ENCODE measurements at regions of chr12 and their contacts with region 1.

Region 1: GRCh38 chr12:53675651-53676453 is at the start of gene ATP5MC2:
- DNase-seq: peak; percentile 97 to 98
- H3K4me3 ChIP-seq: peak within 1 kb of the TSS; percentile 41
- H3K4me3 Mint-ChIP-seq: peak within 1 kb of the TSS; percentile 82
- H3K27ac Mint-ChIP-seq: peak within 1 kb of the TSS; percentile 87
- H3K4me1 ChIP-seq: 0 out of 2 replicates have a peak, but pooled peaks cover 5% of the 10 kb centered on the region
- H3K4me1 Mint-ChIP-seq: no peaks in the 10 kb centered on the region
- H3K27me3 ChIP-seq: no peaks in the 10 kb centered on the region
- H3K27me3 Mint-ChIP-seq: no peaks in the 10 kb centered on the region
- CTCF ChIP-seq: peak; percentile 91 to 99
- total RNA-seq, gene ATP5MC2: 156 and 160 TPM in 2 replicates

Region 2: DNA sequence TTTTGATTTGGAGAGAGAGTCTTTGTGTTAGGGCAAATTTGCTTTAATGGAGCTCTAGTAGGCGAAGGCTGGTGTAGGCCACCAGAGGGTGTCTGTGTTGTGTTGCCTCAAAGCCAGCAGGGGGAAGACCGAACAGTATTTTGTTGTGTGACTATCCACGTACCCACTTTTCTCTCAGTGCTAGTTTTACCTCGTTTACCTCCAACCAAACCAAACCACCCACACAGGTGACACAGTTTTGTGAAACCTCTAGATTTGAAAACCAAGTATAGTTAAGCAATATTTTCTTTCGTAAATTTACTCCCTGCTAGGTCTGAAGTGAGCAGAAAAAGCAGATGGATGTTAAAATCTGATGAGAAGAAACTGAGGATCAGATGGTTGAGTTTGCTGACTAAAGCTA is 132.3 kb before region 1 on chr12:
- CTCF ChIA-PET with region 1: interaction called, 43 read pairs
- POLR2A ChIA-PET with region 1: no interaction called
- intact Hi-C with region 1: loop called (anchors 1 kb)
- DNase-seq: peak; percentile 57 to 59
- H3K4me3 ChIP-seq: no peak overlapping the region
- H3K4me3 Mint-ChIP-seq: no peak overlapping the region
- H3K27ac Mint-ChIP-seq: no peak overlapping the region
- H3K4me1 ChIP-seq: peaks cover 9% of the 10 kb centered on the region
- H3K4me1 Mint-ChIP-seq: no peaks in the 10 kb centered on the region
- H3K27me3 ChIP-seq: no peaks in the 10 kb centered on the region
- H3K27me3 Mint-ChIP-seq: no peaks in the 10 kb centered on the region
- CTCF ChIP-seq: peak; percentile 61 to 94

Region 3: DNA sequence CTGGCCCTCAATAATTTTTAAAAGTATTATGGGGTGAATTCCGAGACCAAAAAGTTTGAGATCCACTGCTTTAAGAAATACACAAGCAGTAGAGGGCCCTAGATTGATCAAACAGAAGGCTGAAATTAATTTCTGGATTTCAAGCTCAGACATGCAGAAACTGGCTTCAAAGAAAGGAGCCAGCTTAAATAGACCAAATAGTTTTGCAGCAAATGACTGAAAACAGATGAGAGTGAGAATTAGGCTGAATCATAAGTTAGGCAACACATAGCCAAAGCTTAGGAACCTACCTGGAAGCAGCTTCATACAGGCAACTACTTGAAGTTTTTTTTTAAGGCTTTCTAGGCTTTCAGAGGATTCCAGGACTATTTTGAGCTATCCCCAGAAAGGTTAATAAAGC is 62.0 kb before region 1 on chr12:
- CTCF ChIA-PET with region 1: no interaction called
- POLR2A ChIA-PET with region 1: interaction called, 11 read pairs
- intact Hi-C with region 1: no loop called
- DNase-seq: no peak
- H3K4me3 ChIP-seq: no peak overlapping the region
- H3K4me3 Mint-ChIP-seq: no peak overlapping the region
- H3K27ac Mint-ChIP-seq: no peak overlapping the region
- H3K4me1 ChIP-seq: no peaks in the 10 kb centered on the region
- H3K4me1 Mint-ChIP-seq: no peaks in the 10 kb centered on the region
- H3K27me3 ChIP-seq: no peaks in the 10 kb centered on the region
- H3K27me3 Mint-ChIP-seq: no peaks in the 10 kb centered on the region
- CTCF ChIP-seq: no peak

Region 4: GRCh38 chr12:53659011-53659551 is 16.8 kb before region 1 on chr12:
- CTCF ChIA-PET with region 1: interaction called, 17 read pairs
- POLR2A ChIA-PET with region 1: interaction called, 5 read pairs
- intact Hi-C with region 1: no loop called
- DNase-seq: peak; percentile 37 to 68
- H3K4me3 ChIP-seq: no peak overlapping the region
- H3K4me3 Mint-ChIP-seq: no peak overlapping the region
- H3K27ac Mint-ChIP-seq: peak overlapping the region; percentile 69
- H3K4me1 ChIP-seq: peaks cover 15% of the 10 kb centered on the region
- H3K4me1 Mint-ChIP-seq: peaks cover 17% of the 10 kb centered on the region
- H3K27me3 ChIP-seq: no peaks in the 10 kb centered on the region
- H3K27me3 Mint-ChIP-seq: no peaks in the 10 kb centered on the region
- CTCF ChIP-seq: no peak

Measured in Caco-2 (cell line).